Activated naive CD8-positive, alpha-beta T cell treated with anti-CD3 and anti-CD28 coated beads, Interleukin-2, amount 10 ng/mL, durations not matched to agents 7 days and 5 days (primary cell): ENCODE measurements at regions of chr3 and their contacts with region 1.

Region 1: DNA sequence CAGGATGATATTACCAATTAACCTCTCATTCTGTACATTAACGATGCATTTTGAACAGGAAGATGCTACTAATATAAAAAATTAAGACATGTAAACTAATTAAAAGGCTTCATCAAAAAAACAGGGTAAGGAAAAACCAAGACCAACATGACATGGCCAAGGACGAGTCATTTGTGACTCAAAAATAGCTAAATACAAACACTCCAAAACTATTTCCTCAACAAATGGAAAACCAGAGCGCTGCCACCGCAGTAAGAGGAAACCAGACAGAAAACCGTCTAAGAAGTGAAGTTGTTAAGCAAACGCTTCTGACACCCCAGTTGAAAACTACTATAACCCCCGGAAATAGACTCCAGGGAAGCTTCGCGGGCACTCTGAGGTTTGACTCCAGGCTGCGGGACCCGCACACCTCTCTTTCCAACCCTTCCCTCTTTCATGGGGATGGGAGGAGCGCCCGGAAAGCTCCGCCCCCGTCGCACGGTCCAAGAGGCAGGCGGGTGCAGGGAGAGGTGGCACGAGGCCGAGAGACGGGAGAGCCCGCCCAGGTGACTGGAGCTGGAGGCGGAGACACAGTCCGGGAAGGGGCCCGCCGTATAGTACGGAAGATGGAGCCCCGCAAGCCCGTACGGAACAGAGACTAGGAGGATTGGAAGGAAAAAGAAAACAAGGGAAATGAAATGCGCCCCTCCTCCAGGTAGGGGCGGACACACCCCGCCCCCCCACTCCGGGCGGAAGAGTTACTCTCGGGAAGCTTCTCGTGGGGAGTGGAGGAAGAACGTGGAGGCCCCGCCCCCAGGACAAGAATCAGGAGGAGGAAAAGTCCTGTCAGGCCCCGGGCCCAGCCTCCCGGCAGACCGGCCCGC is 708 bp downstream of the DCAF1 start:
- DNase-seq: peak; percentile 85
- ATAC-seq: peak; percentile 71
- H3K4me3 Mint-ChIP-seq: peak overlapping the region; percentile 88
- H3K27ac Mint-ChIP-seq: peak overlapping the region; percentile 94
- H3K4me1 Mint-ChIP-seq: peaks cover 1% of the 10 kb centered on the region
- H3K27me3 Mint-ChIP-seq: no peaks in the 10 kb centered on the region

Region 2: DNA sequence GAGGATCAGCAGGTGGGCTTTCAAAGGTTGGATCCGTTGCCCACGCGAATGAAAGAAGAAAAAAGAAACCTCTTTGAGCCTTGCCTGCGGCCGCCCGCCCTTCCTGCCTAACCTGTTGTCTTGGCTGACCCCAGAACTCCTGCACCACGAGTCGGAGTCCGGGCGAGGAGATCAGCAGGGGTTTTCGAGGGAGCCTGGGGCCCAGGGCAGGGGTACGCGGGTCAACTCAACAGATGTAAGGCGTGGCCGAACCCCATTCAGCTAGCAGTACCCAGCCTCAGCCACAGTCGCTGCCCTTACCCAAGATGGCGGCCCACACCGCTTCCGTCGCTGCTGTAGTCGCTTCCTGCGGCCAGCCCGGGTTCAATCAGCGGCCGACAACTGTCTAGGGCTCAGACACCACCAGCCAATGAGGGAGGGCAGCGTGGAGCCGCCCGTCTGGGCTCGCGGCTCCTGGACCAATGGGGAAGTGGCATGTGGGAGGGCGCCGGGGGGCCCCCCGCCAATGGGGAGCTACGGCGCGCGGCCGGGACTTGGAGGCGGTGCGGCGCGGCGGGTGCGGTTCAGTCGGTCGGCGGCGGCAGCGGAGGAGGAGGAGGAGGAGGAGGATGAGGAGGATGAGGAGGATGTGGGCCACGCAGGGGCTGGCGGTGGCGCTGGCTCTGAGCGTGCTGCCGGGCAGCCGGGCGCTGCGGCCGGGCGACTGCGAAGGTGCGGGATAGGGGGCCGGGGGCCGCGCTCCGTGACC is 114.2 kb before region 1 on chr3 and contains the start of gene MANF:
- POLR2A ChIA-PET with region 1: interaction called, 15 read pairs
- DNase-seq: peak; percentile 95
- ATAC-seq: peak; percentile 97
- H3K4me3 Mint-ChIP-seq: peak within 1 kb of the TSS; percentile 91
- H3K27ac Mint-ChIP-seq: peak within 1 kb of the TSS; percentile 95
- H3K4me1 Mint-ChIP-seq: peaks cover 37% of the 10 kb centered on the region
- H3K27me3 Mint-ChIP-seq: no peaks in the 10 kb centered on the region
- total RNA-seq, gene MANF: 86.2 to 88.2 TPM

Region 3: GRCh38 chr3:51522273-51522978 is 23.3 kb after region 1 on chr3:
- POLR2A ChIA-PET with region 1: interaction called, 10 read pairs
- DNase-seq: no peak
- ATAC-seq: no peak
- H3K4me3 Mint-ChIP-seq: peak overlapping the region; percentile 10
- H3K27ac Mint-ChIP-seq: no peak overlapping the region
- H3K4me1 Mint-ChIP-seq: peaks cover 3% of the 10 kb centered on the region
- H3K27me3 Mint-ChIP-seq: peaks cover 2% of the 10 kb centered on the region

Region 4: DNA sequence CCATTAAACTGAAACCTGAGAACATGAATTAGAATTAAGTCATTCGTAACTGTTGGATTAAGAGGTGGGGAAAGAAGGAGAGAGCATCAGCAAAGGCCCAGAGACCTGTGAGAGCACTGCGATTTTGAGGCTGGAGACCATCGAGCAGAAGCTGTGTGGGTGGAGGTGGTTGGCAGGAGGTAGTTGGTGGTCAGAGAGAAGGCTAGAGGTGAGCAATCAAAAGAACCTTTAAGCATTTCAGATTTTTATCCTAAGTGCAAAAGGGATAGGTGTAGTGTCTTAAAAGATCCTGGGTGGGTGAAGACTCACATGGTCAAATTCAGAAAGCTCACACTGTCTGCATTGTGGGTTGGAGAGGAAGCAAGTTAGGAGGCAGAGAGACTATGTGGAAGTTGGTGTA is 106.8 kb after region 1 on chr3:
- POLR2A ChIA-PET with region 1: no interaction called
- DNase-seq: no peak
- ATAC-seq: no peak
- H3K4me3 Mint-ChIP-seq: no peak overlapping the region
- H3K27ac Mint-ChIP-seq: no peak overlapping the region
- H3K4me1 Mint-ChIP-seq: peaks cover 16% of the 10 kb centered on the region
- H3K27me3 Mint-ChIP-seq: no peaks in the 10 kb centered on the region

Region 5: DNA sequence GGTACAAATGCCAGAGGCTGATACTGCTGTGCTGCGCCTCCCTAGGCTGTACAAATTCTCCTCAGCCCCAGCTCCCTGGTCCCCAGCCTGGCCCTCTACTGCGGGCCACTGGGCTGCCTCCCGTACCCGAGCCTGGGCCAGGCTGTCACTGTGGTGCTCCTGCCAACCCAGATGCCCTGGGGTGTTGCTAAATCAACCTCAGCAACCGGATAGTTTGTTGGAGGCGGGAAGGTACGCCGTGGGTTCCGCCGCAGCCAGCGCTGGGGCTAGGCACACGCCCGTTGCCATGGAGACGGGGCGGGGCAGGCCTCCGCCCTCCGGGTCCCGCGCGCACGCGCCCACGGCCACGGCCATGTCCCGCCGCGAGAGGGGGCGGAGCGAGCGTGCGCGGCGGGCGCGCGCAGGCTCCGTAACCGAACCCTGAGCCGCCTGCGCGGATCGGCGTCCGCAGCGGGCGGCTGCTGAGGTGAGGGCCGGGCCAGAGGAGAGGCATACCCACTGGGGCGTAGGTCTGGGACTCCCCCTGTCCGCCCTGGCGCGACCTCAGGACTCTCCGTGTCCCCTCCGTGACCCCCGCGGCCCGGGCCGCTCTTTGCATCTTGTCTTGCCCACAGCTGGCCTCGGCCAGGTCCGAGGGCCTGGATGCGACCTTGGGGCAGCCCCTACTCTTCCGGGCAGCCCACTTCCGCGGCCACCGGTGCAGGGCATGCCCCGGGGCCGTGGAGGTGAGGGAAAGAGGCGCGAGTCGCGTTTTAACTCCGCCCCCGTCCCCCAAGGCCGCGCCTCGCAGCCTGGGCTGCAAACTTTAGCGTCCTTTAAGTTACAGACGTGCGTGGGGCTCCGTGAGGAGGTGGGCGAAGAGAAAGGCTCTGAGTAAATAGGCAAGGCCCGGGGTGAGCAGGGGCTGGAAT is 172.0 kb after region 1 on chr3 and contains the start of gene TEX264:
- POLR2A ChIA-PET with region 1: interaction called, 110 read pairs
- DNase-seq: peak; percentile 98
- ATAC-seq: peak; percentile 78
- H3K4me3 Mint-ChIP-seq: peak within 1 kb of the TSS; percentile 90
- H3K27ac Mint-ChIP-seq: peak within 1 kb of the TSS; percentile 90
- H3K4me1 Mint-ChIP-seq: peaks cover 55% of the 10 kb centered on the region
- H3K27me3 Mint-ChIP-seq: no peaks in the 10 kb centered on the region
- total RNA-seq, gene TEX264: 49.3 to 49.8 TPM